Caco-2 (cell line): ENCODE measurements at regions of chr2 and their contacts with region 1.

Region 1: DNA sequence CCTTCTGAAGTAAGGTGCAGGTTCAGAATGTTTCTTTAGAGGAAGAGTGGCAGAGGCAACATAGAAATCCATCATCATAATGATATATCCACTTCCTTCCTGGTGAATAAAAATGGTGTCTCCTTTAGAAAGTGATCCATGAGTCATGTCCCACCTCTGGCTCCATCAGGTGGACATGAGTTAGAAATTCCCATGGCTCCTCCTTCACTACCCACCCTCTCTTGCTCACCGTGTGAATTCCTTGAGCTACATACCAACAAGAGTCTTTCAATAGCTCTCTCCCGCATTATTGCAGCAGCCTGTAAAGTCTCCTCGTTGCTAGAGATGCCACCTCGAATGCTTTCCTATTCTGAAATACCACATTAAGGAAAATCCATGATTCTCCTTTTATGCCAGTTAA is 317.6 kb downstream of the LNPK start:
- DNase-seq: no peak
- H3K4me3 ChIP-seq: no peak overlapping the region
- H3K4me3 Mint-ChIP-seq: no peak overlapping the region
- H3K27ac Mint-ChIP-seq: no peak overlapping the region
- H3K4me1 ChIP-seq: no peaks in the 10 kb centered on the region
- H3K4me1 Mint-ChIP-seq: peaks cover 7% of the 10 kb centered on the region
- H3K27me3 ChIP-seq: no peaks in the 10 kb centered on the region
- H3K27me3 Mint-ChIP-seq: no peaks in the 10 kb centered on the region
- CTCF ChIP-seq: no peak

Region 2: DNA sequence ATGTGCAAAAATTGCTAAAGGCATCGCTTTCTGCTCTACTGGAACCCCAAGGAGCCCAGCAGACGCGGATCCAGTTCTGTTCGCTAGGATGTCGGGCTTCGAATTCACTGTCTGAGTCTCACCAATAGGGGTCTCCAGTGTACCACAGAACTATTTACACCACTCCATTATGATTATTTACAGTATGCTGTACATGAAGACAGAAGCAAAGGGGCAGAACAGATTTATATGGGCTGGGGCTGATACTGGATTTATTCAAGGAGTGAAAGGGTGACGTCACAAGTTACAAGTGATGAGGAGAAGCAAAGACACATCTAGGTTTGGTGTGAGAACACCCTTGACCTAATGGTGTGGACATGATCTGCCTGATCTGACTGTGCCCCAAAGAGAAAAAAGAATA is 317.6 kb before region 1 on chr2:
- CTCF ChIA-PET with region 1: no interaction called
- POLR2A ChIA-PET with region 1: no interaction called
- intact Hi-C with region 1: loop called (anchors 2 kb)
- DNase-seq: peak; percentile 40 to 62
- H3K4me3 ChIP-seq: no peak overlapping the region
- H3K4me3 Mint-ChIP-seq: no peak overlapping the region
- H3K27ac Mint-ChIP-seq: no peak overlapping the region
- H3K4me1 ChIP-seq: no peaks in the 10 kb centered on the region
- H3K4me1 Mint-ChIP-seq: no peaks in the 10 kb centered on the region
- H3K27me3 ChIP-seq: no peaks in the 10 kb centered on the region
- H3K27me3 Mint-ChIP-seq: peaks cover 16% of the 10 kb centered on the region
- CTCF ChIP-seq: peak; percentile 80 to 87

Region 3: GRCh38 chr2:175414882-175415487 is 269.5 kb before region 1 on chr2:
- CTCF ChIA-PET with region 1: no interaction called
- POLR2A ChIA-PET with region 1: no interaction called
- intact Hi-C with region 1: loop called (anchors 1 kb)
- DNase-seq: peak; percentile 52 to 61
- H3K4me3 ChIP-seq: no peak overlapping the region
- H3K4me3 Mint-ChIP-seq: no peak overlapping the region
- H3K27ac Mint-ChIP-seq: no peak overlapping the region
- H3K4me1 ChIP-seq: peaks cover 7% of the 10 kb centered on the region; the same call in 1 of the 2 replicates
- H3K4me1 Mint-ChIP-seq: peaks cover 4% of the 10 kb centered on the region
- H3K27me3 ChIP-seq: no peaks in the 10 kb centered on the region
- H3K27me3 Mint-ChIP-seq: peaks cover 2% of the 10 kb centered on the region
- CTCF ChIP-seq: peak; percentile 78 to 84

Region 4: DNA sequence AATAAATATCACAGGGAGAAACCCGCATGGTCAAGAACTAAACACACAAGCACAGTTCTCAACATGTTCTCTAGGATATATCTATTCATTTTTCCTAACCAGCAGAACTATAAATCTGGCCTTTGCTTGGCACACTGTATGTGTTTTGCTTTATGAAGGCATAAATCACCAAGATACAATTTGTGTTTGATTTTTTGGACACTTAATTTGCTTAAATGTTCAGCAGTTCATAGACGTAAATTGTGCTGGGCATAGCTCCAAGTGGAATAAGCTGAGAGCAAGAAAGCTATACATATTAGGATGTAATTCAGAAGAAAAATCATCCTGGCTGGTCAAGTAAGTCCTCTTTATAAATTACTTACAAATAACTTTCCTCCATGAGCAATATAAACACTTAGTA is 161.5 kb before region 1 on chr2:
- CTCF ChIA-PET with region 1: no interaction called
- POLR2A ChIA-PET with region 1: no interaction called
- intact Hi-C with region 1: loop called (anchors 10 kb)
- DNase-seq: no peak
- H3K4me3 ChIP-seq: no peak overlapping the region
- H3K4me3 Mint-ChIP-seq: no peak overlapping the region
- H3K27ac Mint-ChIP-seq: no peak overlapping the region
- H3K4me1 ChIP-seq: no peaks in the 10 kb centered on the region
- H3K4me1 Mint-ChIP-seq: peaks cover 6% of the 10 kb centered on the region
- H3K27me3 ChIP-seq: no peaks in the 10 kb centered on the region
- H3K27me3 Mint-ChIP-seq: peaks cover 6% of the 10 kb centered on the region
- CTCF ChIP-seq: no peak